ENCODE measurements at regions of chr16 and their contacts with region 1.

Region 1: GRCh38 chr16:28069971-28070794 is 6.7 kb upstream of the GSG1L start:
- DNase-seq: no peak
- ATAC-seq: peak; percentile 51

Region 2: DNA sequence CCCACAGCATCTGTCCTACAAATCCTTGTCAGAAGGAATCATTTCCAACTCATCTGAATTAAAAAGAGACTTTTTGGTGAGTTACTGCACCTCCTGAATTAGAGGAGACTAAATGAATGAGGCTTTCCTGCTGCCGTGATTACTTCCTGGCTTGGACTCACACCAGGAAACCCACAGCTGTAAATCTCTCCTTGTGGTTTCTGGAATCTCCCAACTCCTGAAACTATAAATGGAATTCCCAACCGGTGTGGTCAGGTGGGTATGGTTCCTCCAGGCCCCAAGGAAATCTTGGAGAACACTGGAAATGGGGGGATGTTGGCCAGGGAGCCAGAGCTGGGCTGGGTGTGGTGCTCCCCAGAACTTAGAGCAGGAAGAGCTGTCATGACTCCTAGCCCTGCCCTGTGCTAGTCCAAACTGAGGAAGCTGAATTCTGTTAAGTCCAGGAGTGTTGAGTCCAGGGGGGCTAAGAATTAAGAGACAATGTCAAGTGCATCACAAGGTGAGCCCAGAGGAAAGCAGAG is 223.1 kb before region 1 on chr16:
- intact Hi-C with region 1: no loop called
- DNase-seq: no peak
- ATAC-seq: no peak

Region 3: DNA sequence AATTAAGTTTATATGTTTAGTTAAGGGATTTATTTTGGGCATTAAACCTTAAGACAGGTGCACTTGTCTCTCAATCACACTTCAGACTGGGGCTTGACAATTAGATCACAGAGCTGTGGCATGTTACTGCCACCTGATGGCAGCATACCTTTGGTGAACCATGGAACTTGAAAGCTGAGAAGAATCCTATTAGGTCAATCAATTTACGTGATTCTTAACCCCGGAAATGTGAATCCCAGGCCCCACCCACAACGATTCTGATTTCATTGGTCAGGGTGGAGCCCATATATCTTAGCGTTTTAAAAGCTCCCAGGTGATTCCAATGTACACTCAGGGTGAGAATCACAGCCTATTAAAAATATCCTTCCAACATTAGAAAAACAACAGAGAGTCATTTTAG is 97.7 kb before region 1 on chr16:
- intact Hi-C with region 1: loop called (anchors 5 kb)
- DNase-seq: no peak
- ATAC-seq: peak; percentile 53

Region 4: DNA sequence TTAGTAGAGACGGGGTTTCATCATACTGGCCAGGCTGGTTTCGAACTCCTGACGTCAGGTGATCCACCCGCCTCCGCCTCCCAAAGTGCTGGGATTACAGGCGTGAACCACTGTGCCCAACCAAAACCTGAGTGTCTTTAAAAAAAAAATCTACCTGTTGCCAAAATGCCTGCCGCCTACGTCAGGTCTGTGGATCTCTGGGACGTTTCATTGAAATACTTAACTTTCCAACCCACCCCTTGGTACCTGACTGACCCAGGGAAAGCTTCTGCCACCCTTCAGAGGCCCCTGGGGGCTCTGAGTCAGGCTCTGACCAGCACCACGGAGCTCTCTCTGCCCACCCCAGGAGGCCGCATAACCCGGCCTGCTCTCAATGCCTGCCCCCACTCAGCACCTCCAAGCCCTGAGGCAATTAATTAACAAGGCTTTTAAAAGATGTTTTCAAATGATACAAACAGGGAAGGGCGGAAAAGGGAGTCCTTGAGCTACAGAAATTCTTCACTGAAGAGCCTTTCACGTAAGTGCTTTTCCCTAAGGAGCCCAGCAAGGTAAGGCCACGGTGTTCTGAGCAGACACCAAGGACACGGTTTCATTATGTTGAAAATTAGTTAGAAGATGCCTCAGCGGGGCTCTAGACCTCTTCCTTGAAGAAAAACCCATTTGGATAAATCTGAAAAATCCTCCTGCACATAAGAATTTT is 22.7 kb after region 1 on chr16:
- intact Hi-C with region 1: no loop called
- DNase-seq: no peak
- ATAC-seq: no peak